Activated T-helper 1 cell treated with anti-CD3 and anti-CD28 coated beads, Interleukin-12 subunit alpha, Interleukin-12 subunit beta, Interleukin-2, Interleukin-4 antibody, amounts not matched to agents 30 ng/mL and 10 ng/mL and 1 ng/mL, durations not matched to agents 14 hours and 24 hours and 36 hours (primary cell): ENCODE measurements at regions of chr12 and their contacts with region 1.

Region 1: DNA sequence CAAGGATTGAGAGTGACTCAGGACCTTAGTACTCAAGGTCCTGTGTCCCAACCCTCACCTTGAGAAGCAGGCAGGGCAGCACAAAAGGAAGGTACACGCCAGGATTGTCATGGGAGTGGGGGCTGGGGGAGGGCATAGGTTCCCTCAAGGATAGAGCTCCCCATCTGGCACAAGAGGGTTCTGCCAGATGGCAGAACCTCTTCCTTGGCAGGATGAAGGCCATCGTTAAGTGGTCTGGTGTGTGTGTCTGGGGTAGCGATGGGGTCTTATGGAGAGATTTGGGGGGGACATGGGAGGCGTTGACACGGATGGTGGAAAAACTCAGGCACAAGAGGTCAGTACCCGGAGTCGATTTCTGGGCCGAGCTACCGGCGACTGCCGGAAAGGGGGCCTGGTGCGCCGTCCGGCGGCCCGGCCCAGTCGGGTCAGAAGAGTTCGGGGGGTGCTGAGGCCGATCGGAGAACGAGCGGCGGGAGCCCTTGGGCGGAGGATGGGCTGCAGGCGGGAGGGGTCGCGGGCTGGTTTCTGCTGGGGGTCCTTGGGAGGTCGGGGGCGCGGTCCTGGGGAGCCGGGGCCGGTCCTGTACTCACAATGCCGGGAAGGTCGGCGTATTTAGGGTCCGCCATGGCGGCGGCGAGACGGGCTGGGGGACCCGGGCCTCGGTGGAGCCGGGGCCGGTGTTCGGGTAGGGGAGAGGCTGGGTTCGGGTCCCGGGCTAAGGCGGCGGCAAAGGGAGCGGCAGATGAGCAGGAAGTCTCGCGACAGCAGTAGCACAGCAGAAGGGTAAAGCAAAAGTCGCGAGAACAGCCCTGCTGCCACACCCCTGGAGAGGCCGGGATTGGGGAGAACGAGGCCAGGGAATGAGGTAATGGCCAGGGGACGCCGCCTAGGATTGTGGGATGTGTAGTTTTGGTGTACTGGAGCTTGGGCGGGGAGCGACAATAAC is at the start of gene DCTN2:
- DNase-seq: peak; percentile 93
- H3K4me3 Mint-ChIP-seq: peak within 1 kb of the TSS; percentile 100
- H3K27ac Mint-ChIP-seq: peak within 1 kb of the TSS; percentile 97
- H3K4me1 Mint-ChIP-seq: peaks cover 49% of the 10 kb centered on the region
- H3K27me3 Mint-ChIP-seq: peaks cover 13% of the 10 kb centered on the region
- total RNA-seq, gene DCTN2: 78.6 and 83.5 TPM in 2 replicates

Region 2: GRCh38 chr12:56152318-56153033 is 1394.2 kb before region 1 on chr12 and contains the start of gene MYL6B:
- intact Hi-C with region 1: loop called (anchors 5 kb)
- DNase-seq: peak; percentile 92
- H3K4me3 Mint-ChIP-seq: peak within 1 kb of the TSS; percentile 88
- H3K27ac Mint-ChIP-seq: peak within 1 kb of the TSS; percentile 99
- H3K4me1 Mint-ChIP-seq: peaks cover 39% of the 10 kb centered on the region
- H3K27me3 Mint-ChIP-seq: no peaks in the 10 kb centered on the region
- total RNA-seq, gene MYL6B: 58.8 and 67.6 TPM in 2 replicates

Region 3: DNA sequence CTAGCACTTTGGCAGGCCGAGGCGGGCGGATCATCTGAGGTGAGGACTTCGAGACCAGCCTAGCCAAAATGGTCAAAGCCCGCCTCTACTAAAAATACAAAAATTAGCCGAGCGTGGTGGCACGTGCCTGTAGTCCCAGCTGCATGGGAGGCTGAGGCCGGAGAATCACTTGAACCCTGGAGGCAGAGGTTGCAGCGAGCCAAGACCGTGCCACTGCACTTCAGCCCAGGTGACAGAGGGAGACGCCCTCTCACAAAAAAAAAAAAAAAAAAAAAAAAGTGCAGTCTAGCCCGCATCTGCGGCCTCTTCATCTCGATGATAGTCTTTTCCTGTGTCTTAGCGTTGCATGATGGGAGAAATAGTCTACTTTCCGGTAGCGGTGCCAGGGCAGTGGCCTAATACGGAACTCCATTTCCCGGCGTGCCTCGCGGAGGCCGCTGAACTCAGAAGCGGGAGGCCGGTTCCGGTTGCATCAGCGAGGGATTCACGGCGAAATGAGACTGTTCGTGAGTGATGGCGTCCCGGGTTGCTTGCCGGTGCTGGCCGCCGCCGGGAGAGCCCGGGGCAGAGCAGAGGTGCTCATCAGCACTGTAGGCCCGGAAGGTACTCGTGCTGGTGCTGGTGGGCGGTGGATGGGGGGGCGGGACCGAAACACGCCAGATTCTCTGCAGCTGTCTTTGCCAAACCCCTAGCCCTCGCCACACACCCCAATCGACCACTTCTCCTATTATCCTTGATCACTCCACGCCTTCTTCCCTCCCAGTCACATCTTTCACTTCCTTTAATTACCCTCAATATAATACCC is 58.9 kb before region 1 on chr12 and contains the start of gene MARS1:
- intact Hi-C with region 1: loop called (anchors 1 kb)
- DNase-seq: peak; percentile 91
- H3K4me3 Mint-ChIP-seq: peak within 1 kb of the TSS; percentile 97
- H3K27ac Mint-ChIP-seq: peak within 1 kb of the TSS; percentile 96
- H3K4me1 Mint-ChIP-seq: peaks cover 33% of the 10 kb centered on the region
- H3K27me3 Mint-ChIP-seq: no peaks in the 10 kb centered on the region
- total RNA-seq, gene MARS1: 283 and 318 TPM in 2 replicates

Region 4: GRCh38 chr12:57558864-57559263 is 12.2 kb after region 1 on chr12:
- intact Hi-C with region 1: loop called (anchors 1 kb)
- DNase-seq: no peak
- H3K4me3 Mint-ChIP-seq: no peak overlapping the region
- H3K27ac Mint-ChIP-seq: no peak overlapping the region
- H3K4me1 Mint-ChIP-seq: no peaks in the 10 kb centered on the region
- H3K27me3 Mint-ChIP-seq: peaks cover 11% of the 10 kb centered on the region

Region 5: GRCh38 chr12:57590536-57591479 is 44.1 kb after region 1 on chr12 and contains the start of gene PIP4K2C:
- intact Hi-C with region 1: loop called (anchors 1 kb)
- DNase-seq: peak; percentile 77
- H3K4me3 Mint-ChIP-seq: peak within 1 kb of the TSS; percentile 90
- H3K27ac Mint-ChIP-seq: peak within 1 kb of the TSS; percentile 75
- H3K4me1 Mint-ChIP-seq: peaks cover 31% of the 10 kb centered on the region
- H3K27me3 Mint-ChIP-seq: no peaks in the 10 kb centered on the region
- total RNA-seq, gene PIP4K2C: 22.8 and 25.7 TPM in 2 replicates

Region 6: DNA sequence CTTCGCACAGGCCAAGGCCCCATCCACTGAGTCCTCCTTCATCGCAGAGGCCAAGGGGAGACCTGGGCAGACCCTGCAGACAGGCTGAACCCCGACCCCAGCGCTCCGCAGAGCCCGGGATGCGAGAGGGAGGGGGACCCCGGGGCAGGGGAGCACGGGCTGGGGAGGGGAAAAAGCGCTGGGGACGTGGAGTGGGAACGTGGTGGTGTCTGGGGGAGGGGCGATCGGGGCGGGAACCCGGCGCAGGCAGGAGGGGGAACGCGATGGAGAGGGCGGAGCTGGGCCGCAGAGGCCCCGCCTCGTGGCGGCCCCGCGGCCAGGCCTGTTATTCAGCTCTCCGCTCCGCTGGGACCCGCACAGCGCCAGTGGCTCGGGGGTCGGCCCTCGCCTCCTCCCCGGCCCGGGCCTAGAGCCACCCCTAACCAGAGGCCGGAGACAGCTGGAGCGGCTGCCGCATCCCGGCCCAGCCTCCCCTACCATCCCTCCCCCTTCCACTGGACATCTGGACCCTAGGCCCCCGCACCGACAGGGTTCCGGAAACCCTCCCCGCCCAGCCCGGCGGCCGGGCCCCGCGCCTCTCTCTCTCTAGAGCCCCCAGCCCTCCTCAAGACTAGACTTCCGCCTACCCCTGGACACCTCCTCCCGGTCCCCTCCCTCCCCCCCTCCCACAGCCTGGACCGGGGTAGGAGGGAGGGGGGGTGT is 64.5 kb after region 1 on chr12 and contains the start of gene ARHGEF25:
- intact Hi-C with region 1: loop called (anchors 5 kb)
- DNase-seq: no peak
- H3K4me3 Mint-ChIP-seq: peak within 1 kb of the TSS; percentile 75
- H3K27ac Mint-ChIP-seq: peak within 1 kb of the TSS; percentile 43
- H3K4me1 Mint-ChIP-seq: peaks cover 5% of the 10 kb centered on the region
- H3K27me3 Mint-ChIP-seq: peaks cover 41% of the 10 kb centered on the region
- total RNA-seq, gene ARHGEF25: 0.60 and 1.5 TPM in 2 replicates